H1 (cell line): ENCODE measurements at regions of chr16 and their contacts with region 1.

Region 1: GRCh38 chr16:228818-229730 is at the start of gene LUC7L:
- DNase-seq: peak; percentile 51 to 94
- H3K4me3 ChIP-seq: peak within 1 kb of the TSS; percentile 64 to 99 (median 92)
- H3K27ac ChIP-seq: peak within 1 kb of the TSS; percentile 96
- H3K4me1 ChIP-seq: peaks cover 0 to 5% (median 0%) of the 10 kb centered on the region in 4 experiments; a peak in 3 of 7 replicates
- H3K27me3 ChIP-seq: no peaks in the 10 kb centered on the region
- CTCF ChIP-seq: no peak
- EP300 ChIP-seq: no peak
- POLR2A ChIP-seq: peak; percentile 94 to 99
- RAD21 ChIP-seq: no peak
- total RNA-seq, gene LUC7L: 121 and 129 TPM in 2 replicates

Region 2: GRCh38 chr16:188671-189070 is 40.4 kb before region 1 on chr16:
- CTCF ChIA-PET with region 1: interaction called, 3 read pairs
- POLR2A ChIA-PET with region 1: interaction called, 348 read pairs
- DNase-seq: no peak
- H3K4me3 ChIP-seq: no peak overlapping the region
- H3K27ac ChIP-seq: no peak overlapping the region
- H3K4me1 ChIP-seq: no peaks in the 10 kb centered on the region
- H3K27me3 ChIP-seq: no peaks in the 10 kb centered on the region
- CTCF ChIP-seq: peak; percentile 21 to 59 (median 58); a peak in 3 of 4 replicates
- EP300 ChIP-seq: no peak
- POLR2A ChIP-seq: no peak
- RAD21 ChIP-seq: no peak; a peak in 1 of 4 replicates

Region 3: DNA sequence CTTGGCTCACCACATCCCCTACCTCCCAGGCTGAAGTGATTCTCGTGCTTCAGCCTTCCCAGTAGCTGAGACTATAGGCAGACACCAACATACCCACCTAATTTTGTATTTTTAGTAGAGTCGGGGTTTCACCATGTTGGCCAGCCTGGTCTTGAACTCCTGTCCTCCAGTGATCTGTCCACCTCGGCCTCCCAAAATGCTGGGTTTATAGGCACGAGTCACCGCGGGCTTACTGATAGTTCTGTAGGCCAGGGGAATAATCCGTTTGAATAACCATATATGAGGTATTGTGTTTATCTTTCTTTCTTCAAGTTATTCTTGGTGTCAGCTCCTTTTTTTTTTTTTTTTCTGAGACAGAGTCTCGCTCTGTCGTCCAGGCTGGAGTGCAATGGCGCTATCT is 13.2 kb after region 1 on chr16:
- CTCF ChIA-PET with region 1: interaction called, 6 read pairs
- POLR2A ChIA-PET with region 1: interaction called, 26 read pairs
- DNase-seq: no peak
- H3K4me3 ChIP-seq: no peak overlapping the region
- H3K27ac ChIP-seq: no peak overlapping the region
- H3K4me1 ChIP-seq: no peaks in the 10 kb centered on the region
- H3K27me3 ChIP-seq: no peaks in the 10 kb centered on the region
- CTCF ChIP-seq: no peak
- EP300 ChIP-seq: no peak
- POLR2A ChIP-seq: no peak
- RAD21 ChIP-seq: no peak

Region 4: DNA sequence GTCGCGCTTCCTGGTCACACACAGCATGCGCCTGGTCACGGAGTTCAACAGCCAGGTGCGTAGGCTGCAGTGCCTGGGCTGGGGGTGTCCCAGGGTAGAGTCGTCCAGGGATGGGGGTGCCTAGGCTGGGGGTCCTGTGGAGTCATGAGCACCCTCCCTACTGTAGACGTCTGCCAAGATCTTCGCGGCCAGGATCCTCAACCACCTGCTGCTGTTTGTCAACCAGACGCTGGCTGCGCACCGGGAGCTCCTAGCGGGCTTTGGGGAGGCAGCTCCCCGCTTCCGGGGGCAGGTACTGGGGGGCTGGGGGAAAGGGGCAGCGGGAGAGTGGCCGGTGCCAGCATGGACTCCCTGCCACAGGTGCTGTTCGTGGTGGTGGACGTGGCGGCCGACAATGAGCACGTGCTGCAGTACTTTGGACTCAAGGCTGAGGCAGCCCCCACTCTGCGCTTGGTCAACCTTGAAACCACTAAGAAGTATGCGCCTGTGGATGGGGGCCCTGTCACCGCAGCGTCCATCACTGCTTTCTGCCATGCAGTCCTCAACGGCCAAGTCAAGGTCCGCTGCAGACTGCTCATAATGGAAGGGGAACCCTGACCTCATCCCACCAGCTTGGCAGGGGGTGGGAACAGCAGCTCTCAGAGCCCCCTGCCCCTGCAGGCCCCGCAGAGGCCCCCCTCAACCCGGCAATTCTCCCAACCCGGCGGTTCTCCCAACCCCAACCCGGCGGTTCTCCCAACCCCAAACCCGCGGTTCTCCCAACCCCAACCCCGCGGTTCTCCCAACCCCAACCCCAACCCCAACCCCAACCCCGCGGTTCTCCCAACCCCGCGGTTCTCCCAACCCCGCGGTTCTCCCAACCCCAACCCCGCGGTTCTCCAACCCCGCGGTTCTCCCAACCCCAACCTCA is 56.3 kb after region 1 on chr16:
- CTCF ChIA-PET with region 1: no interaction called
- POLR2A ChIA-PET with region 1: no interaction called
- DNase-seq: no peak
- H3K4me3 ChIP-seq: no peak overlapping the region
- H3K27ac ChIP-seq: no peak overlapping the region
- H3K4me1 ChIP-seq: peaks cover 0 to 3% (median 0%) of the 10 kb centered on the region in 4 experiments; a peak in 2 of 7 replicates
- H3K27me3 ChIP-seq: peaks cover 5 to 14% (median 9%) of the 10 kb centered on the region in 4 experiments; a peak in 6 of 7 replicates
- CTCF ChIP-seq: no peak
- EP300 ChIP-seq: no peak
- POLR2A ChIP-seq: no peak
- RAD21 ChIP-seq: no peak